ENCODE measurements at regions of chr5 and their contacts with region 1.

Region 1: GRCh38 chr5:50962934-50963872 is 296.8 kb downstream of the PARP8 start:
- DNase-seq: no peak
- H3K4me3 ChIP-seq: peak overlapping the region; percentile 50 to 58 (median 52)
- H3K27ac ChIP-seq: no peak overlapping the region
- H3K4me1 ChIP-seq: peaks cover 20 to 41% (median 35%) of the 10 kb centered on the region in 4 donors
- H3K27me3 ChIP-seq: peaks cover 0 to 95% (median 57%) of the 10 kb centered on the region in 4 donors
- CTCF ChIP-seq: peak; percentile 74 to 90 (median 85)
- EP300 ChIP-seq: no peak
- POLR2A ChIP-seq: no peak

Region 2: GRCh38 chr5:52007230-52007858 is 1044.1 kb after region 1 on chr5:
- intact Hi-C with region 1: loop called (anchors 5 kb)
- DNase-seq: no peak
- H3K4me3 ChIP-seq: no peak overlapping the region
- H3K27ac ChIP-seq: no peak overlapping the region
- H3K4me1 ChIP-seq: no peaks in the 10 kb centered on the region
- H3K27me3 ChIP-seq: no peaks in the 10 kb centered on the region
- CTCF ChIP-seq: peak; percentile 33 to 52 (median 36)
- EP300 ChIP-seq: no peak
- POLR2A ChIP-seq: no peak

Region 3: DNA sequence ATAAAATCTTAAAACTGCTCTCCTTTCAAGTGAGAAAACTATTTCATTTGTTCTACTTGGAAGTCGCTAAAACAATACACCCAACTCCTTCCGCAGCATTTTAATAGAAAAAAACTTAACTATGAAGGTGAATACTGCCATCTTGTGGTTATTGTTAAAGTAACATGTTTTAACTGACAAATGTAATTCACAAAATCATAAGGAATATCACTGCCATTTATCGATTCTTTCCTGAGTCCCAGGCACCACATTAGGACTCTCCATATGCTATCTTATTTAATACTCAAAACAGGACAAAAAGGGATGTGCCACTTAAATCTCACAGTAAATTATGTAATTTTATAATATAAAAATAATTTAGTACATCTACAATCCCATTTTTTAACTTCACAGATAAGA is 1694.0 kb after region 1 on chr5:
- intact Hi-C with region 1: loop called (anchors 2 kb)
- DNase-seq: no peak
- H3K4me3 ChIP-seq: no peak overlapping the region
- H3K27ac ChIP-seq: no peak overlapping the region
- H3K4me1 ChIP-seq: peaks cover 0 to 3% (median 1%) of the 10 kb centered on the region in 4 donors
- H3K27me3 ChIP-seq: no peaks in the 10 kb centered on the region
- CTCF ChIP-seq: peak; percentile 38 to 60 (median 59)
- EP300 ChIP-seq: no peak
- POLR2A ChIP-seq: no peak

Measured in esophagus muscularis mucosa (tissue), 4 donors.